Right ventricle myocardium inferior (tissue), 1 donor: ENCODE measurements at regions of chr10 and their contacts with region 1.

Region 1: DNA sequence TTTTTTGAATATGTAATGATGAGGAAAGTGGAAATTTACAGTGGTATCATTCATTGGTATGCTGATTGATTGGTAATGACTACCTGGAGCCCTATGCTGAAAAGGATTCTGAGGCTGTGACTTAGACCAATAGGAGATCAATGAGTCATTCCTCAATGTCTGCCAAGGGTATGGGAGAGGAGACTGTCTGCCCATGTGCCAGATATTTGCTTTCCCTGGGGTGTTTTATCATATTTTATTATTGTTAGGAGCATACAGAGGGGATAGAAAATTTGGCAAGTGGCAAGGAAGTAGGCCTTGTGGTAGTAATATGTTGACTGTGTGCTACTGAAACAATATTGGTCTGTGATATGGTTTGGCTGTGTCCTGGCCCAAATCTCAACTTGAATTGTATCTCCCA is 54.8 kb downstream of the ASAH2B start:
- DNase-seq: no peak
- ATAC-seq: no peak

Region 2: GRCh38 chr10:49015700-49016099 is 1778.8 kb before region 1 on chr10:
- intact Hi-C with region 1: no loop called
- DNase-seq: no peak
- ATAC-seq: no peak

Region 3: GRCh38 chr10:51047857-51048256 is 253.4 kb after region 1 on chr10:
- intact Hi-C with region 1: loop called (anchors 5 kb)
- DNase-seq: no peak
- ATAC-seq: no peak